ENCODE measurements at regions of chr21 and their contacts with region 1.

Region 1: DNA sequence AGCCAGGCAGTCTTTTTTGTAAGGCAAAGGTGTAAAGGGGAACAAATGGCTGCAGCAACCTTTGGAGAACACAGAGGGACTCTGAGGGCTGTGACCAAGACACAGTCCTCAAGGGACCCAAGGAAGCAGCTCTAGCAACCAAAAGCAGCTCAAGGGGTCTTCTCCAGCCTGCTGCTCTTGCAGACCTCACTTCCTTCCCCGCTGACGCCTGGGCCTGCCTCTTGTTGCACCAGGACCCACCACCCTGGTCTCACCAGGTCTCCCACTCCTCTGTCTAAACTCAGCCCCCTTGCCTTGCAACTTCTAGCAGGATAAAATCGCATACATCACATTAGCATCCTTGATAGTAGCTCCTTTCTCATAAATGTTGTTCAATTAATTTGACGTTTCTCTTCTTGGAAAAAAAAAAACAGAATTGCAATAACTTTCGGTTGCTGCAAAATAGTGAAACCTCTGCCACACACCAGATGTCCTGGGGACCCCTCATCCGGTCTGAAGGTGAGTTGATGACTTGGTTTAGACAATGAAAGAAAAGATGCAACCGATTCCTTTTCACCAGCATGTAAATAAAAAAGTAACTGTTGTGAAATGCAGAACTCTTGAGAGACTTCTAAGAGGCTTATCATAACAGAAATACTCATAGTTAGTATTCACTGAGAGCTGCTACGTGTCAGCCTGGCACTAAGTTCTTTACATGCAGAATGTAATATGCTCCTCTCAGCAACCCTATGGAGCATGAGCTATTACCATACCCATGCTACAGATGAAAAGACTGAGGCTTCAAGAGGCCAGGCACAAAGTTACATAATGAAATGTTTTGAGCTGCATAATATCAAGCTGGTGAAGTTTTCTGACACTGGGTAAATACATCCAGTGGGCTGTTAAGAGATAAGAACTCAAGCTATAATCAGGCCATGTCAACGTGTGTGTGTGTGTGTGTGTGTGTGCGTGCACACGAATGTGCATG is 58.5 kb downstream of the UMODL1 start:
- DNase-seq: no peak
- H3K4me3 ChIP-seq: no peak overlapping the region
- CTCF ChIP-seq: no peak
- POLR2A ChIP-seq: no peak

Region 2: DNA sequence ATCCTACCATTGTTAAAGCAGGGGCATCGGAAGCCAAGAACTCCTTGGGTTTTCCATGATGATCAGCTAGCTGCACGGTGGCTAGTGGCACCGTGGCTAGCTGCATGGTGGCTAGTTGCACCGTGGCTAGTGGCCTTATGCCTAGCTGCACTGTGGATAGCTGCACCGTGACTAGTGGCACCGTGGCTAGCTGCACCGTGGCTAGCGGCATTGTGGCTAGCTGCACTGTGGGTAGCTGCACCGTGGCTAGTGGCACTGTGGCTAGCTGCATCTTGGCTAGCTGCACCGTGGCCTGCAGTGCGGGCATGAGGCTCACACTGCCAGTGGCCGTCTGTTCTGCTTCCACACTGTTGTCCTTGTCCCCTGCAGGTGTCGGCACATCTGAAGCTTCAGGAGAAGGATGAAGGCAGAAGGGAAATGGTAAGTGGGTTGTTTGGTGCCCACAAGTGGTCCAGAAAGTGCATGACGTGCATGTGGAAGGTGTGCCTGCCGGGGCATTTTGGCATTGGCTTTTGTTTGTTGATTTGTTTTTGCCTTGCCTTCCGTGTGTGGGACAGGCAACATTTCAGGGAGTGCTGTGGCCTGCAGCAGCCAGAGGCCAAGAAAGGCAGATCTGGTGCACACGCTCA is 147.1 kb after region 1 on chr21:
- intact Hi-C with region 1: loop called (anchors 1 kb)
- DNase-seq: no peak
- H3K4me3 ChIP-seq: no peak overlapping the region
- CTCF ChIP-seq: no peak
- POLR2A ChIP-seq: no peak